HepG2 (cell line): ENCODE measurements at regions of chr5 and their contacts with region 1.

Region 1: DNA sequence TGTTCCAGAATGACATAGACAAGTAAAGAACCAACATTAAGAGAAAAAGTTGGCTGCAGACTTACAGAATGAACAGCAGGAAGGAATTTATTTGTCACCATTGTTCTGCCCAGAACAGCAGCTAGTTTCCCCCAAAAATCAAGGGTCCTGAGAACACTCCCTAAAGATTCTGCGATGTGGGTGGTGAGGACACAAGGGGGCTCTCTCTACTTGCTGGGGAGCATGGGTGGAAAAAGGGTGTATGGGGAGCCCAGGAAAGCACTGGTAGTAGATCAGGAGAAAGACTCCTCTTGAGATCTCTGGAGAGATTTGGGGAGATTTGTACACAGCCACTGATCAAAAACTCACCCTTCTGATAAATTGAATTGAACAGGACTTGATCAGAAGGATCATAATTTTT is 316.5 kb downstream of the KCTD16 start:
- DNase-seq: no peak
- ATAC-seq: no peak
- H3K4me3 ChIP-seq: no peak overlapping the region
- H3K27ac ChIP-seq: no peak overlapping the region
- H3K4me1 ChIP-seq: no peaks in the 10 kb centered on the region
- H3K27me3 ChIP-seq: no peaks in the 10 kb centered on the region
- CTCF ChIP-seq: peak; percentile 29; the same call in 1 of the 2 replicates
- EP300 ChIP-seq: no peak
- POLR2A ChIP-seq: no peak
- RAD21 ChIP-seq: no peak

Region 2: DNA sequence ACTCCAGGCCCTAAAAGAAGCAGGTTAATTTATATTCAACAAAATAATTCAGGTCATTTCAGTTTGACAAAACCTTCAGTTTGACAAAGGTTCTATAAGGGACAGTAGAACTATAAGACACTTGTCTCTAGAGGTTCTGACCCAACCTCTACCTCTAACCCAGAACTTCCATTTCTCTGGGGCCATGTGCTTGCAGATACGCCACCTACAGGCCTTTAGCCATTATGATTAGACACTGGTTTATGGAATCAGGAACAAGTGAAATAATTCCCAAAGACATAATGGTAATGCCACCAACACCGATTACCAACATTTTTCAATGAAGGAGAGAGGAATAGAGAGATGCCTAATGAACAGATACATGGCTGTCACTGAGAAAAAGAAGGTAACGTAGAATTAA is 614.0 kb after region 1 on chr5:
- CTCF ChIA-PET with region 1: no interaction called
- POLR2A ChIA-PET with region 1: no interaction called
- in situ Hi-C with region 1: no loop called
- intact Hi-C with region 1: loop called (anchors 5 kb)
- DNase-seq: peak; percentile 2
- ATAC-seq: no peak
- H3K4me3 ChIP-seq: no peak overlapping the region
- H3K27ac ChIP-seq: no peak overlapping the region
- H3K4me1 ChIP-seq: no peaks in the 10 kb centered on the region
- H3K27me3 ChIP-seq: no peaks in the 10 kb centered on the region
- CTCF ChIP-seq: peak; percentile 48
- EP300 ChIP-seq: no peak
- POLR2A ChIP-seq: no peak
- RAD21 ChIP-seq: no peak